ENCODE measurements at regions of chr12 and their contacts with region 1.

Region 1: GRCh38 chr12:50314629-50315312 is 31.5 kb upstream of the LIMA1 start:
- DNase-seq: peak; percentile 54 to 61
- ATAC-seq: peak in 1 of 2 experiments; percentile 68; a peak in 4 of 6 replicates
- H3K4me3 ChIP-seq: no peak overlapping the region
- H3K27ac ChIP-seq: peak overlapping the region in 1 of 2 experiments; percentile 66; a peak in 4 of 6 replicates
- H3K4me1 ChIP-seq: peaks cover 20% of the 10 kb centered on the region
- CTCF ChIP-seq: peak; percentile 78
- EP300 ChIP-seq: no peak
- POLR2A ChIP-seq: no peak
- RAD21 ChIP-seq: peak; percentile 88 to 91

Region 2: GRCh38 chr12:50111693-50112455 is 202.9 kb before region 1 on chr12 and contains the start of gene COX14:
- CTCF ChIA-PET with region 1: interaction called, 14 read pairs
- POLR2A ChIA-PET with region 1: no interaction called
- DNase-seq: peak; percentile 99 to 100
- ATAC-seq: peak; percentile 87 to 93
- H3K4me3 ChIP-seq: peak within 1 kb of the TSS; percentile 68
- H3K27ac ChIP-seq: peak within 1 kb of the TSS; percentile 74 to 90
- H3K4me1 ChIP-seq: peaks cover 29% of the 10 kb centered on the region
- CTCF ChIP-seq: peak; percentile 94
- EP300 ChIP-seq: no peak
- POLR2A ChIP-seq: peak; percentile 96
- RAD21 ChIP-seq: peak; percentile 40 to 48; a peak in 3 of 5 replicates
- polyA plus RNA-seq, gene COX14: 134 and 147 TPM in 2 replicates

Region 3: DNA sequence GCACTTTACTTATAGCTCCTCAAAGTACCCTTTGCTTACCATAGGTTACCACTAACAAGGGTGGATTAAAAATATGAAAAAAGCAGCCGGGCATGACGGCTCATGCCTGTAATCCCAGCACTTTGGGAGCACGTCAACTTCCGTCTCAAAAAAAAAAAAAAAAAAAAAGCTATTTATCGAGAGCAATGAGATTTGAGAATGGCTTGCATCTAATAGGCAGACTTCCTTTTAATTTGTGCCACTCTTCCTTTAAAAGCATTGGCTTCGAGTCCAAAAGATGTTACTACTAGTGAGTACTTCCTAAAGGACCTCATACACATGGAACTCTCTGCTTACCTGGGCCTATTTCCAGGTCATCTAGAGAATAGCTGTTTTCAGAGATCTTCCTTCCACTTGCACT is 109.1 kb before region 1 on chr12:
- CTCF ChIA-PET with region 1: interaction called, 32 read pairs
- POLR2A ChIA-PET with region 1: no interaction called
- DNase-seq: no peak
- ATAC-seq: no peak
- H3K4me3 ChIP-seq: no peak overlapping the region
- H3K27ac ChIP-seq: no peak overlapping the region
- H3K4me1 ChIP-seq: peaks cover 16% of the 10 kb centered on the region; the same call in 2 of the 3 replicates
- CTCF ChIP-seq: no peak
- EP300 ChIP-seq: no peak
- POLR2A ChIP-seq: no peak
- RAD21 ChIP-seq: no peak

Region 4: GRCh38 chr12:50222275-50222795 is 92.4 kb before region 1 on chr12:
- CTCF ChIA-PET with region 1: interaction called, 12 read pairs
- POLR2A ChIA-PET with region 1: no interaction called
- DNase-seq: peak in 1 of 2 experiments; percentile 73
- ATAC-seq: peak; percentile 82 to 89; a peak in 5 of 6 replicates
- H3K4me3 ChIP-seq: peak overlapping the region; percentile 6; the same call in 1 of the 3 replicates
- H3K27ac ChIP-seq: peak overlapping the region; percentile 43 to 67
- H3K4me1 ChIP-seq: peaks cover 54% of the 10 kb centered on the region
- CTCF ChIP-seq: no peak
- EP300 ChIP-seq: no peak
- POLR2A ChIP-seq: no peak
- RAD21 ChIP-seq: no peak

Region 5: DNA sequence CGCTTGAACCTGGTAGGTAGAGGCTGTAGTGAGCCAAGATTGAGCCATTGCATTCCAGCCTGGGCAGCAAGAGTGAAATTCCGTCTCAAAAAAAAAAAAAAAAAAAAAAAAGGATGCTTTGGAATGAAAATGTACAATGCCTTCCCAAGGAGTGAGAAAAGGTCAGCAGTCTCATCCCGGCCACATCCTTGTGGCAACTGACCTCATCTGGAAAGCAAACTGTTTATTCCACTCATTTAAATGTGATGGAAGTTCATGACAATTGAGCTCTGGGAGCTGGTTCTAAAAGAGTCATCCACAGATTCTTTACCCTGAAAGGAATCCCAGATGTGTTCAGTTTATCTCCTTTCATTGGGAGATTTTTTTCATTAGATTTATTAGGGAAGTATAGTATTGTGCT is 12.1 kb before region 1 on chr12:
- CTCF ChIA-PET with region 1: interaction called, 20 read pairs
- POLR2A ChIA-PET with region 1: no interaction called
- DNase-seq: no peak
- ATAC-seq: no peak
- H3K4me3 ChIP-seq: no peak overlapping the region
- H3K27ac ChIP-seq: peak overlapping the region in 1 of 2 experiments; percentile 22; a peak in 1 of 6 replicates
- H3K4me1 ChIP-seq: peaks cover 26% of the 10 kb centered on the region
- CTCF ChIP-seq: no peak
- EP300 ChIP-seq: no peak
- POLR2A ChIP-seq: no peak
- RAD21 ChIP-seq: no peak

Region 6: GRCh38 chr12:50458606-50459005 is 143.8 kb after region 1 on chr12:
- CTCF ChIA-PET with region 1: no interaction called
- POLR2A ChIA-PET with region 1: no interaction called
- DNase-seq: no peak
- ATAC-seq: no peak
- H3K4me3 ChIP-seq: no peak overlapping the region
- H3K27ac ChIP-seq: no peak overlapping the region
- H3K4me1 ChIP-seq: 0 out of 3 replicates have a peak, but pooled peaks cover 3% of the 10 kb centered on the region
- CTCF ChIP-seq: no peak
- EP300 ChIP-seq: no peak
- POLR2A ChIP-seq: no peak
- RAD21 ChIP-seq: no peak

Region 7: GRCh38 chr12:50537538-50537919 is 222.8 kb after region 1 on chr12:
- CTCF ChIA-PET with region 1: no interaction called
- POLR2A ChIA-PET with region 1: no interaction called
- DNase-seq: peak; percentile 30 to 40
- ATAC-seq: peak; percentile 33 to 44; a peak in 3 of 6 replicates
- H3K4me3 ChIP-seq: no peak overlapping the region
- H3K27ac ChIP-seq: peak overlapping the region; percentile 1 to 71; a peak in 4 of 6 replicates
- H3K4me1 ChIP-seq: peaks cover 67% of the 10 kb centered on the region
- CTCF ChIP-seq: no peak
- EP300 ChIP-seq: no peak
- POLR2A ChIP-seq: no peak
- RAD21 ChIP-seq: no peak